GM12878 (cell line): ENCODE measurements at regions of chr17 and their contacts with region 1.

Region 1: GRCh38 chr17:9217151-9218056 is 196.1 kb downstream of the NTN1 start:
- DNase-seq: no peak
- ATAC-seq: no peak
- H3K4me3 ChIP-seq: no peak overlapping the region
- H3K27ac ChIP-seq: no peak overlapping the region
- H3K4me1 ChIP-seq: no peaks in the 10 kb centered on the region
- H3K27me3 ChIP-seq: no peaks in the 10 kb centered on the region; a peak in 1 of 4 replicates
- CTCF ChIP-seq: no peak
- EP300 ChIP-seq: no peak
- POLR2A ChIP-seq: no peak
- RAD21 ChIP-seq: no peak

Region 2: DNA sequence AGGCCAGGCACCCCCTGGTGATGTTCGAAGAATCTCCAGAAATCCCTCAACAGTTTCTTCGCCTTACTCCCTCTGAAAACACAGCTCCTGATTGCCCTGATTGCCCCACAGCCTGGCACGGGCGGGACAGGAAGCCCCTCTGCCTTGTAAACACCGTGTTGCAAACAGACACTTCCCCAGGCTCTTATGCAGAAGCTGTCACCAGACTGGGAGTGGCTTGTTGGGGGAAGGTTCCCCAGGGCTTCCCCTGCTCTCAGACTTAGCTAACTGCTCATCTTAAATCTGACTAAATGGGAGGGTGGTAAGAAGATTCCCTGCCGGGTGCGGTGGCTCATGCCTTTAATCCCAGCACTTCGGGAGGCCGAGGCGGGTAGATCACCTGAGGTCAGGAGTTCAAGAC is 263.1 kb before region 1 on chr17:
- CTCF ChIA-PET with region 1: no interaction called
- POLR2A ChIA-PET with region 1: no interaction called
- RAD21 ChIA-PET with region 1: no interaction called
- SMC1A ChIA-PET with region 1: no interaction called
- in situ Hi-C with region 1: no loop called
- intact Hi-C with region 1: no loop called
- DNase-seq: no peak
- ATAC-seq: peak; percentile 72
- H3K4me3 ChIP-seq: no peak overlapping the region
- H3K27ac ChIP-seq: peak overlapping the region; percentile 81
- H3K4me1 ChIP-seq: peaks cover 85% of the 10 kb centered on the region
- H3K27me3 ChIP-seq: no peaks in the 10 kb centered on the region
- CTCF ChIP-seq: no peak
- EP300 ChIP-seq: peak; percentile 9 to 27; a peak in 1 of 4 replicates
- POLR2A ChIP-seq: peak; percentile 31; the same call in 1 of the 2 replicates
- RAD21 ChIP-seq: no peak

Region 3: GRCh38 chr17:9200699-9201359 is 16.6 kb before region 1 on chr17:
- CTCF ChIA-PET with region 1: interaction called, 4 read pairs
- POLR2A ChIA-PET with region 1: no interaction called
- RAD21 ChIA-PET with region 1: no interaction called
- SMC1A ChIA-PET with region 1: interaction called, 16 read pairs
- in situ Hi-C with region 1: no loop called
- intact Hi-C with region 1: no loop called
- DNase-seq: peak; percentile 31
- ATAC-seq: peak; percentile 80
- H3K4me3 ChIP-seq: no peak overlapping the region
- H3K27ac ChIP-seq: no peak overlapping the region
- H3K4me1 ChIP-seq: peaks cover 14% of the 10 kb centered on the region
- H3K27me3 ChIP-seq: peaks cover 0 to 1% of the 10 kb centered on the region in 2 experiments; a peak in 1 of 4 replicates
- CTCF ChIP-seq: no peak
- EP300 ChIP-seq: no peak
- POLR2A ChIP-seq: no peak
- RAD21 ChIP-seq: no peak

Region 4: DNA sequence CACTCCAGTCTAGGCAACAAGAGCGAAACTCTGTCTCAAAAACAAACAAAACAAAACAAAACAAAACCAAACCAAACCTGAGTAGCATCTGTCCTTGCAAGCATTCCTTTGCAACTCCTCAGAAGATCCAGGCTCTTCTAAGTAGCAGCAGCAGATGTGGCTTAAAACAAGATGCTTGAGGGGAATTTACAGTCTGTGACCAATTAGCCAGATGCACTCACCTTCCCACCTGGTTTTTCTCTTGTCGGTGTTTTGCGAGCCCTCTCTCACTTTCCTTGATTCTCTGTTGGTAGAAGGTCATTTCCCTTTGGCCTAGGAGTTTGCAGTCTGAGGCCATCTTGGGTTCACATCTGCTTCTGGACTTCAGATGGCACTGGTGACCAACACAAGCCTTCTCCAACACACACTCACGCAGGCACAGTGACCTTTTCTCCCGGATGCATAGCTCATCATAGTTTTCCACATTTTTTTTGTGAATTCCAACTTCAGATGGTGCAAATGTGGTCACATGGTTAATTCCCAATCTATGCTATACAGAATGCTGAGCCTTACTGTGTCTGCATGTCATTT is 81.5 kb after region 1 on chr17:
- CTCF ChIA-PET with region 1: no interaction called
- POLR2A ChIA-PET with region 1: no interaction called
- RAD21 ChIA-PET with region 1: no interaction called
- SMC1A ChIA-PET with region 1: no interaction called
- in situ Hi-C with region 1: no loop called
- intact Hi-C with region 1: no loop called
- DNase-seq: no peak
- ATAC-seq: no peak
- H3K4me3 ChIP-seq: no peak overlapping the region
- H3K27ac ChIP-seq: no peak overlapping the region
- H3K4me1 ChIP-seq: peaks cover 4% of the 10 kb centered on the region; the same call in 1 of the 2 replicates
- H3K27me3 ChIP-seq: no peaks in the 10 kb centered on the region
- CTCF ChIP-seq: no peak
- EP300 ChIP-seq: no peak
- POLR2A ChIP-seq: no peak
- RAD21 ChIP-seq: no peak